Heart right ventricle (tissue), 16 donors: ENCODE measurements at regions of chr1 and their contacts with region 1.

Region 1: GRCh38 chr1:228770779-228771223 is 35.5 kb downstream of the RHOU start:
- DNase-seq: no peak
- ATAC-seq: no peak
- H3K4me3 ChIP-seq: no peak overlapping the region
- H3K27ac ChIP-seq: no peak overlapping the region
- H3K4me1 ChIP-seq: peaks cover 0 to under 1% (median 0%) of the 10 kb centered on the region in 9 donors
- H3K27me3 ChIP-seq: peaks cover 0 to 46% (median 17%) of the 10 kb centered on the region in 7 donors
- CTCF ChIP-seq: no peak

Region 2: GRCh38 chr1:228669242-228669585 is 101.6 kb before region 1 on chr1:
- intact Hi-C with region 1: no loop called
- DNase-seq: no peak
- ATAC-seq: peak in 4 of 8 donors; percentile 45 to 82 (median 72)
- H3K4me3 ChIP-seq: no peak overlapping the region
- H3K27ac ChIP-seq: no peak overlapping the region
- H3K4me1 ChIP-seq: peaks cover 0 to 11% (median 3%) of the 10 kb centered on the region in 9 donors
- H3K27me3 ChIP-seq: peaks cover 0 to 11% (median 0%) of the 10 kb centered on the region in 7 donors
- CTCF ChIP-seq: no peak

Region 3: DNA sequence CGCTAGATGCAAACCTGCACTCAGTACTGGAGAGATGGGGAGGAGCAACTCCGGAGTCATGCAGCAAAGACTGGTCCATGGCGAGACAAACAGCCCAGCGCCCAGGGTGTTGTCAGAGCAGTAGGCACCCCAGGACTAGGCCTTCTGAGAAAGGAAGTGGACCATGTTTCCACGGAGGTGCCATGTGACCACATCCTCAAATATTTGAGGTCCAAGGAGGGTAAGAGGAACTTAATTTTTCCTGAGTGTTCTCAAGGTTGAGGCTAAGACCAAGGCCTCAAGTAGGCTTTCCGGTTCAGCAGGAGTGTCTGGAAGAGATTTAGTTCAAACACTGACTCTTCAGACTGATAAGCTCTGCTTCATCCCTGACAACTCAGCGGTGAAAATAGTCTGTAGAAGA is 150.7 kb after region 1 on chr1:
- intact Hi-C with region 1: loop called in 1 of 10 experiments (anchors 10 kb)
- DNase-seq: no peak
- ATAC-seq: peak in 3 of 8 donors; percentile 28 to 62 (median 39)
- H3K4me3 ChIP-seq: no peak overlapping the region
- H3K27ac ChIP-seq: peak overlapping the region in 1 of 10 donors; percentile 63
- H3K4me1 ChIP-seq: peaks cover 0 to 25% (median 0%) of the 10 kb centered on the region in 9 donors
- H3K27me3 ChIP-seq: no peaks in the 10 kb centered on the region
- CTCF ChIP-seq: no peak

Region 4: GRCh38 chr1:229046251-229046853 is 275.6 kb after region 1 on chr1:
- intact Hi-C with region 1: no loop called
- DNase-seq: no peak
- ATAC-seq: peak in 4 of 8 donors; percentile 39 to 66 (median 52)
- H3K4me3 ChIP-seq: no peak overlapping the region
- H3K27ac ChIP-seq: no peak overlapping the region
- H3K4me1 ChIP-seq: peaks cover 0 to 15% (median 0%) of the 10 kb centered on the region in 9 donors
- H3K27me3 ChIP-seq: peaks cover 0 to 21% (median 3%) of the 10 kb centered on the region in 7 donors
- CTCF ChIP-seq: no peak